Right lobe of liver (tissue), 6 donors: ENCODE measurements at regions of chr22 and their contacts with region 1.

Region 1: DNA sequence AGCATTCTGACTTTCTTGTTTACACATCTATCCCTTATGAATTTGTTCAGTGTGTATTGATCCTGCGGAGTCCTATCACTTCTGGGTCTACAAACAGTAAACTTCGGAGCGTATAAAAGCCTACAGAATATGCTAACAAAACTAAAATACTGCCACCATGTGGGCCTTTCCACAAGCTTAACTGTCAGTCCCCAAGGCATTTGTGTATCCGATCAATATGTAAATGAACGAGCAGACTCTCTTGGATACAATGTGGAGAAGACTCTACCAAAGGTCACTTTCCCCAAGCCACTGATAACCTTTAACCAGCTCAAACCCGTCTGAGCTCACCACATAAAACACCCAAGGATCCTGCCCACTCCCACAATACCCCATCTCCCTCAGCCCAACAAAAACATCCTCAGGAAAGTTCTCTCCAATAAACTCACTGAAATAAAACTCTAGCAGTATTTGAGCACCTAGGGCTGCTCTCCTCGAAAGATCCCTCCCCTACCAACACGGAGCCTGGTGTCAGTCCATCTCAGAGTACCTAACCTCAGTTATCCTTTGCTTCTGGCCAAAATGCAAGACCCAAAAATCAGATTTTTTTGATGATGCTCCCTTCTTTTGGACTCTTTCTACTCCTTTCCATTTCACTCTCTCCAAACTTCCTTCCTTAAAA is 17.8 kb downstream of the ADA2 start:
- DNase-seq: peak in 1 of 3 donors; percentile 57
- ATAC-seq: peak; percentile 89 to 95 (median 92)
- H3K4me3 ChIP-seq: peak overlapping the region in 1 of 3 donors; percentile 1
- H3K27ac ChIP-seq: peak overlapping the region in 1 of 3 donors; percentile 30
- H3K4me1 ChIP-seq: peaks cover 0 to 6% (median 3%) of the 10 kb centered on the region in 4 donors
- H3K27me3 ChIP-seq: no peaks in the 10 kb centered on the region
- CTCF ChIP-seq: peak; percentile 53 to 68 (median 56)
- POLR2A ChIP-seq: no peak

Region 2: GRCh38 chr22:17501679-17502285 is 300.4 kb after region 1 on chr22:
- intact Hi-C with region 1: loop called in 1 of 2 experiments (anchors 10 kb)
- DNase-seq: no peak
- ATAC-seq: peak; percentile 85 to 92 (median 87)
- H3K4me3 ChIP-seq: no peak overlapping the region
- H3K27ac ChIP-seq: no peak overlapping the region
- H3K4me1 ChIP-seq: no peaks in the 10 kb centered on the region
- H3K27me3 ChIP-seq: no peaks in the 10 kb centered on the region
- CTCF ChIP-seq: peak; percentile 59 to 79 (median 70)
- POLR2A ChIP-seq: no peak